ENCODE measurements at regions of chr14 and their contacts with region 1.

Region 1: GRCh38 chr14:52729925-52730667 is at the start of gene STYX:
- DNase-seq: peak; percentile 99
- H3K4me3 ChIP-seq: peak within 1 kb of the TSS; percentile 55 to 100 (median 95)
- H3K27ac ChIP-seq: peak within 1 kb of the TSS; percentile 70
- H3K4me1 ChIP-seq: peaks cover 4% of the 10 kb centered on the region
- H3K27me3 ChIP-seq: no peaks in the 10 kb centered on the region
- CTCF ChIP-seq: peak in 1 of 2 donors; percentile 15
- total RNA-seq, gene STYX: 14.0 to 23.2 TPM

Region 2: GRCh38 chr14:52650774-52651173 is 79.3 kb before region 1 on chr14:
- CTCF ChIA-PET with region 1: no interaction called
- dilution Hi-C with region 1: no loop called
- in situ Hi-C with region 1: no loop called
- intact Hi-C with region 1: no loop called
- DNase-seq: no peak
- H3K4me3 ChIP-seq: no peak overlapping the region
- H3K27ac ChIP-seq: no peak overlapping the region
- H3K4me1 ChIP-seq: no peaks in the 10 kb centered on the region
- H3K27me3 ChIP-seq: no peaks in the 10 kb centered on the region
- CTCF ChIP-seq: no peak

Region 3: GRCh38 chr14:52678591-52678990 is 51.5 kb before region 1 on chr14:
- CTCF ChIA-PET with region 1: no interaction called
- dilution Hi-C with region 1: no loop called
- in situ Hi-C with region 1: no loop called
- intact Hi-C with region 1: loop called (anchors 5 kb)
- DNase-seq: no peak
- H3K4me3 ChIP-seq: no peak overlapping the region
- H3K27ac ChIP-seq: no peak overlapping the region
- H3K4me1 ChIP-seq: no peaks in the 10 kb centered on the region
- H3K27me3 ChIP-seq: no peaks in the 10 kb centered on the region
- CTCF ChIP-seq: peak; percentile 43 to 51

Region 4: DNA sequence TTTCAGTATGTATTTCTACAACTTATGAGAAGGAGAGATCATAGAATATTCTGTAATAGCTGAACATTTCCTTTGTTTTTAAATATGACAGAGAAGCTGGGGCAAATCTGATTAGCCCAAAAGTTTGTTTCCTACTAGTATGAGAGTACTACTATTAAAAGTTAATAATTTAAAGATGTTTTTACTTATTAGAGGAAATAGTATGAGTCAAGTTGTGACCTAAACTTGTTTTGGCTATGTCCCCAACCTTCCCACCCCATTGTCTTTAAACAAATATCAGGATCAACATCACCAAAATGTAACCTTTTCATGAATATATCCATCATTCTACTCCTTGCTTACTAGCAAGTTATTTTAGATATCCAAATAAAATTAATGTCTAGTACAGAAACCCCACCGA is 50.8 kb after region 1 on chr14:
- CTCF ChIA-PET with region 1: no interaction called
- dilution Hi-C with region 1: no loop called
- in situ Hi-C with region 1: no loop called
- intact Hi-C with region 1: loop called (anchors 5 kb)
- DNase-seq: no peak
- H3K4me3 ChIP-seq: no peak overlapping the region
- H3K27ac ChIP-seq: no peak overlapping the region
- H3K4me1 ChIP-seq: no peaks in the 10 kb centered on the region
- H3K27me3 ChIP-seq: no peaks in the 10 kb centered on the region
- CTCF ChIP-seq: no peak

Region 5: DNA sequence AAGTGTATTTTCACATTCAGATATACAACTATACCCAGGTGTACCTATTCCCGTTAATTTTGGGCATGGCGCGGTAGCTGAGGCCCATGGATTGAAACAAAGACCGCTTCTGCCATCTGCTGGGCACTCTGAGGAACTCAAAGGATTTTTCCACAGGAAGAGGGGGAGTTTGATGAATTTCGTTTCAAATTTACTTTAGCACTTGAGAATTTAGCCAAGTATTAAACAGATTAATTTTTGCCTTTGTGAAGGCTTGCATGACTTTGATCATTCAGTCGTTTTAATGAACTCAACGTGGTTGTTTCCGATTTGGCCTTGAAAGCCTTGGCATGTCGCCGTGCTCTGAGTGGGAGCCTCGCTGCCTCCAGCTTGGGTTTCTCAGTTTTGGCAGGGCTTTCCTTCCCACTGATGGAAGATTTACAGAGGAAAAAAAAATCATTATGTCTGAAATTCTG is 576.2 kb after region 1 on chr14:
- CTCF ChIA-PET with region 1: no interaction called
- dilution Hi-C with region 1: no loop called
- in situ Hi-C with region 1: no loop called
- intact Hi-C with region 1: no loop called
- DNase-seq: no peak
- H3K4me3 ChIP-seq: peak overlapping the region; percentile 36 to 57 (median 49)
- H3K27ac ChIP-seq: no peak overlapping the region
- H3K4me1 ChIP-seq: peaks cover 10% of the 10 kb centered on the region
- H3K27me3 ChIP-seq: no peaks in the 10 kb centered on the region
- CTCF ChIP-seq: peak; percentile 63 to 77

Measured in mammary epithelial cell (primary cell).